A673 (cell line): ENCODE measurements at regions of chr2 and their contacts with region 1.

Region 1: DNA sequence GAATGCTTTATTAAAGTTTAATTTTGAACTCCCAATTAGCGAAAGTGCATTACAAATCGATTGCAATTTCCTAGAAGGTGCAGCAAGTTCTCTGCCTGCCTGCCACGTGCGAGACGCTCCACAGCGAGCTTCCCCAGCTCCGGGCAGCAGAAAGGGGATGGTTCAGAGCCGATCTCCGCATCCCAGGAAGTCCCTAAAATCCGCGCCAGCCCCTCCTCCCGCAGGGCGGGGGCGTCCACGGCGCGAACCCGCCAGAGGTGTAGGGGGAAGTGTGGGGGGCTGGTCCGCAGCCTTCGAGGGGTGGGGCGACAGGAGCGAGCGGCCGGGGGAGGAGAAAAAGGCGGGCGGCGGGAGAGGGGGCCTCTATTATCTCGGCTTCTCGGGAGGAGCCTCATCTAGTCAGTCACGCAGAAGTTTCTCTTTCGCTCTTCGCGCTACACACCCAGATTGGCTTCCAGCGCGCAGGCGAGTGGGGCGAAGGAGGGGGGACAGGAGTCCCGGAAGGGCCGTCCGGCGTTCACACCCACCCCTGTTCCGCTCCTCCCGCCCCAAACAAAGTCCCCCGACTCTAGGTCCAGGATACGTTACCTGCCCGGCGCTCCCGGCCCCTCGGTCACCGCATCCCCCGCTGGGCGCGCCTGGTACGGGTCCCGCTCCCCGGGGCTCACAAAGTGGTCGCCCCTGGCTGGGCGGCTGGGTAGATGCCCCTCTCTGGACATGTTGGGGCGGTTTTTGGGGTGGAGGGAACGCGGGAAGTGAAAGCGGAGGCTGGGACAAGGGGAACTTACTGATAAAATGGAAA is 9.1 kb upstream of the NR4A2 start:
- DNase-seq: peak; percentile 97
- H3K4me3 ChIP-seq: peak overlapping the region; percentile 88
- H3K27ac ChIP-seq: peak overlapping the region; percentile 100
- H3K4me1 ChIP-seq: peaks cover 42% of the 10 kb centered on the region
- H3K27me3 ChIP-seq: no peaks in the 10 kb centered on the region
- CTCF ChIP-seq: no peak

Region 2: DNA sequence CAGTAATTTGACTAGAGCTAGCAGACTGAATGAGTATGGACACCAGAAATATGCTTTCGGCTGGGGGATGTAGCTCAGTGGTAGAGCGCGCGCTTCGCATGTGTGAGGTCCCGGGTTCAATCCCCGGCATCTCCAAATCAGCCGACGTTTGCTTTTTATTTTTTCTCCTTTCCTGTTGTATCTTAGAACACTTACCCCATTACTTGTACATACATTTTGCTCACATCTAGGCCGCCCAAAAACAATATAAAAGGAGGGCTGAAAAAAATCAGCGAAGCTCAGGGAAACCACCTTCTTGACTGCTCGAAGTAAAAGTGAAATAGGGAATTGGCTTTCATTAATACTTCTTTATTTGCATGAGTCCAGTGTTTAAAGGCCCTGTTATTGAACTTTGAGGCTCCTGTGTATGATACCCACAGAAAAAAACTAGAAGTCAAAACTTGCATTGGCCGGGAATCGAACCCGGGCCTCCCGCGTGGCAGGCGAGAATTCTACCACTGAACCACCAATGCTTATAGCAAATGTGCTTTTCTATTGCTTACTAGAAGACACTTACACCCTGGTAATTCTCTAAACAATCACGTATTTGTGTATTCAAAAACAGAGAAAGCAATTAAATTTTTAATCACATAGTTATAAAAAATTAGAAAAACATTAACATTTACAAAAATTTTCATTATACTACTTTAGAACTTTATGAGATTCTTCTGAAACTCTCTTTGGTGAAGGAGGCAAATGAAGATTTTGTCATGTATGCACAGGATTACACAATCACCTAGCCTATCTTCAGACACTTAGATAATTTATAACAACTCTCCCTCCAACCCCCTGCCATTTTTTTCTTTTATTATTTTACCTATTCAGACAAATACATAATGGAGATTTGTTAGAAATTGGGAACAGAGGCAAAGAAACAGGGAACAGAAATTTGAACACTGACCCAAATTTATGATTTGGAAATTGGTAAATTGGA is 59.3 kb after region 1 on chr2:
- CTCF ChIA-PET with region 1: no interaction called
- POLR2A ChIA-PET with region 1: no interaction called
- intact Hi-C with region 1: loop called (anchors 2 kb)
- DNase-seq: peak; percentile 85
- H3K4me3 ChIP-seq: peak overlapping the region; percentile 76
- H3K27ac ChIP-seq: peak overlapping the region; percentile 87
- H3K4me1 ChIP-seq: no peaks in the 10 kb centered on the region
- H3K27me3 ChIP-seq: no peaks in the 10 kb centered on the region
- CTCF ChIP-seq: no peak

Region 3: DNA sequence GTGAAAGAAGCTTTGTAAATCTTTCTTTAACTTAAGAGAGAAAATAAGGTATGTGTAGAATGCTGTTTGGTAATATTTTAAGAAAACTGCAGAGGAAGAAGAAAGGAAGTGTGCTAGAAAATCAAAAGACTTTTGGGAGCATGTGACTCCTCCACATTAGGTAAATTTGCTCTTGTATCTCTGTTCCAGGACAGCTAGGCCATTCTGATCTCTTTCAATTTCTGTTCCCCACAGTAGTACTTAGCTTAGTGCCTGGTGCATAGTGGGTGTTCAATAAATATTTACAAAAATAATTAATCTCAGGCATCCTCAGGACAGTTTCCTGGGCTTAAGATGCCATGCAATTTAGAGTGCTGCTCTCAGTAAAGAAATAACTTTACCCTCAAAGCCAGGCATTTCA is 199.6 kb after region 1 on chr2:
- CTCF ChIA-PET with region 1: no interaction called
- POLR2A ChIA-PET with region 1: no interaction called
- intact Hi-C with region 1: no loop called
- DNase-seq: no peak
- H3K4me3 ChIP-seq: no peak overlapping the region
- H3K27ac ChIP-seq: no peak overlapping the region
- H3K4me1 ChIP-seq: no peaks in the 10 kb centered on the region
- H3K27me3 ChIP-seq: no peaks in the 10 kb centered on the region
- CTCF ChIP-seq: no peak

Region 4: GRCh38 chr2:156704617-156705016 is 363.0 kb after region 1 on chr2:
- CTCF ChIA-PET with region 1: no interaction called
- POLR2A ChIA-PET with region 1: no interaction called
- intact Hi-C with region 1: no loop called
- DNase-seq: peak; percentile 7
- H3K4me3 ChIP-seq: no peak overlapping the region
- H3K27ac ChIP-seq: no peak overlapping the region
- H3K4me1 ChIP-seq: peaks cover 13% of the 10 kb centered on the region
- H3K27me3 ChIP-seq: no peaks in the 10 kb centered on the region
- CTCF ChIP-seq: no peak

Region 5: GRCh38 chr2:156818944-156819343 is 477.3 kb after region 1 on chr2:
- CTCF ChIA-PET with region 1: no interaction called
- POLR2A ChIA-PET with region 1: no interaction called
- intact Hi-C with region 1: loop called (anchors 10 kb)
- DNase-seq: peak; percentile 96
- H3K4me3 ChIP-seq: no peak overlapping the region
- H3K27ac ChIP-seq: no peak overlapping the region
- H3K4me1 ChIP-seq: peaks cover 32% of the 10 kb centered on the region
- H3K27me3 ChIP-seq: peaks cover 17% of the 10 kb centered on the region
- CTCF ChIP-seq: no peak

Region 6: DNA sequence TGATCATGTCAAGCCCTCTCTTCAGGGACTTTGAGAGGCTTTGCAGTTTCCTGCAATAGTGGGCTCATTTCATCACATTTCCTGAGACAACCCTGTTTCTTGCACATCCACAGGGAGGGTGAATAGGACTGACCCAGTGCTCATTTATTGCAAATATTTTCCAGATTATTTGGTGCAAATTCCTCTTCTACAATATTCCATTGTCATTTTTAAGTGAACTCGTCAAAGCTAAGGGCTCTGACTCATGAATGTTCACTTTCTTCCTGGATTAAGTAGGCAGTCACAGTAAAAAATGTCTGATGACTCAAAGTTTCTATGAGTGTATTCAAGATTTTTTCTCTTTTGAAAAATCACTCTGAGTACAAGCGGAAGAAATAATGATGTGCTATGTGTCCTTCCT is 690.4 kb after region 1 on chr2:
- CTCF ChIA-PET with region 1: no interaction called
- POLR2A ChIA-PET with region 1: no interaction called
- intact Hi-C with region 1: loop called (anchors 5 kb)
- DNase-seq: peak; percentile 82
- H3K4me3 ChIP-seq: no peak overlapping the region
- H3K27ac ChIP-seq: no peak overlapping the region
- H3K4me1 ChIP-seq: peaks cover 20% of the 10 kb centered on the region
- H3K27me3 ChIP-seq: no peaks in the 10 kb centered on the region
- CTCF ChIP-seq: no peak

Region 7: DNA sequence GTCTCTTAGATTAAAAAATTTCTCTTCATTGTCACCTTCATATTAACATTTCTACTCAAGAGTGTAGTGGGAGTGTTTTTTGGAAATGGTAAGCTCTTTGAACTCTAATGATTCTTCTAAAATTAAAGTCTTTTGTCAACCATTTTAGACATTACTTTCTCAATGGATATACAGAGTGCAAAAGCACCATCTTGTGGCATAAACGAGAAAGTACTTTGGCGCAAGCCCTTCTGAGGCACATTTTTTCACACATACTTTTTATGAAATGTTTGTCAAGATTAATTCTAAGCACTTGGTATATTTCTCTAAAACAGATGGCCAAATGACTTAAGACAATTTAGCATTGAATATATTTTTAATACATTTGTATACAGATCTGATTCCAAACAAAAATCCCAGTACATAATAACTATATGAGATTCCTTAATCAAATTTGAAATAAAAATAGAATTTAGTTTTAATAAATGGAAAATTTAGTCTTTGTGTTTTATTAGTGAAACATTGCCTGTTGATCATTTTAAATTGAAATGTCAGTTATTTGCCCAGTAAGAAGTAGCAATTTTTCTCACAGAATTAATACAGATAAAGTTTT is 852.5 kb after region 1 on chr2:
- CTCF ChIA-PET with region 1: no interaction called
- POLR2A ChIA-PET with region 1: no interaction called
- intact Hi-C with region 1: loop called (anchors 5 kb)
- DNase-seq: peak; percentile 71
- H3K4me3 ChIP-seq: no peak overlapping the region
- H3K27ac ChIP-seq: no peak overlapping the region
- H3K4me1 ChIP-seq: no peaks in the 10 kb centered on the region
- H3K27me3 ChIP-seq: no peaks in the 10 kb centered on the region
- CTCF ChIP-seq: peak; percentile 82

Region 8: DNA sequence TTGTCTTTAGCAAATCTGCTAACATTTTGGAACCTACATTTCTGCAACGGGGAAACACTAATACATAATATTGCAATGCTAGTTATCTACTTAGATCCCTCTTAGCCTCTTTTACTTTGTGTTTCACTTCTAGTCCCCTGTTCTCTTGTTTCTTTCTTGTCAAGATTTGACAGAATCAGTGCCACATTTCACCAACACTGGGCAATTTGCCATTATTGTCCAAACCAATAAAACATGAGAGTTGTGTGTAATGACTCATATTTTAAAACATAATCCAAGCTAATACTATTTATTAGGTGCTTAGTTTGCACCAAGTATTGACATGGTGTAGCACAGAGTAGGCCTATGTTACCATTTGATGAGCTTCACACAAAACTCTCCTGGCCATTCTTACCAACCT is 1320.7 kb after region 1 on chr2:
- CTCF ChIA-PET with region 1: no interaction called
- POLR2A ChIA-PET with region 1: no interaction called
- intact Hi-C with region 1: no loop called
- DNase-seq: peak; percentile 1
- H3K4me3 ChIP-seq: no peak overlapping the region
- H3K27ac ChIP-seq: no peak overlapping the region
- H3K4me1 ChIP-seq: no peaks in the 10 kb centered on the region
- H3K27me3 ChIP-seq: no peaks in the 10 kb centered on the region
- CTCF ChIP-seq: no peak